ENCODE measurements at regions of chr12 and their contacts with region 1.

Region 1: GRCh38 chr12:114673169-114673833 is 10.7 kb downstream of the TBX3 start:
- DNase-seq: no peak
- ATAC-seq: peak; percentile 33 to 61
- H3K4me3 ChIP-seq: peak overlapping the region; percentile 50
- H3K27ac ChIP-seq: peak overlapping the region; percentile 84
- H3K4me1 ChIP-seq: no peaks in the 10 kb centered on the region
- H3K27me3 ChIP-seq: peaks cover 52% of the 10 kb centered on the region
- CTCF ChIP-seq: no peak

Region 2: GRCh38 chr12:115049614-115050013 is 376.3 kb after region 1 on chr12:
- intact Hi-C with region 1: no loop called
- DNase-seq: no peak
- ATAC-seq: no peak
- H3K4me3 ChIP-seq: no peak overlapping the region
- H3K27ac ChIP-seq: no peak overlapping the region
- H3K4me1 ChIP-seq: no peaks in the 10 kb centered on the region
- H3K27me3 ChIP-seq: no peaks in the 10 kb centered on the region
- CTCF ChIP-seq: no peak

Region 3: GRCh38 chr12:115752913-115753726 is 1079.8 kb after region 1 on chr12:
- intact Hi-C with region 1: loop called (anchors 10 kb)
- DNase-seq: no peak
- ATAC-seq: peak; percentile 71 to 79
- H3K4me3 ChIP-seq: no peak overlapping the region
- H3K27ac ChIP-seq: no peak overlapping the region
- H3K4me1 ChIP-seq: peaks cover 14% of the 10 kb centered on the region
- H3K27me3 ChIP-seq: no peaks in the 10 kb centered on the region
- CTCF ChIP-seq: peak; percentile 64

Measured in lower lobe of right lung (tissue), 2 donors.